GM10248 (cell line): ENCODE measurements at regions of chr1 and their contacts with region 1.

Region 1: DNA sequence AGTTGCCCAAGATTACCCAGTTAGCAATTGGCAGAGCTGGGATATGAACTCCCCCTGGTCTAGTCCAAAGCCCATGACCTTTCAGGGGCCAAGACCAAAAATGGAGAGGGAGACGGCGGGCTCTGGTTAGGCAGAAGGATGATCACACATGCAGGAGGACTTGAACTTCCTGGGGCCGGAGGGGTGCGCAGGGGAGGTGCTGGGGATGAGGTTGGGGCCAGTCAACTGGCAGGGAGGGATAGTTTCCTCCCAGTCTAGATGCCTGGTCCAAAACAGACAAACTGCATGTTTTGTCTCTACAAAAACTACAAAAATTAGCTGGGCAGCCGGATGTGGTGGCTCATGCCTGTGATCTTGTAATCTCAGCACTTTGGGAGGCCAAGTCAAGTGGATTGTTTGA is 78.1 kb downstream of the NKAIN1 start:
- DNase-seq: no peak
- CTCF ChIP-seq: no peak

Region 2: GRCh38 chr1:31174556-31174955 is 13.0 kb after region 1 on chr1:
- CTCF ChIA-PET with region 1: interaction called, 27 read pairs
- POLR2A ChIA-PET with region 1: no interaction called
- DNase-seq: no peak
- CTCF ChIP-seq: no peak